CD4-positive, alpha-beta T cell (primary cell): ENCODE measurements at regions of chr3 and their contacts with region 1.

Region 1: GRCh38 chr3:179562591-179563270 is at the start of gene ACTL6A:
- DNase-seq: peak; percentile 94 to 99 (median 98)
- ATAC-seq: peak; percentile 90
- H3K4me3 ChIP-seq: peak within 1 kb of the TSS; percentile 83
- H3K4me3 Mint-ChIP-seq: peak within 1 kb of the TSS; percentile 91
- H3K27ac ChIP-seq: peak within 1 kb of the TSS; percentile 38 to 57
- H3K27ac Mint-ChIP-seq: peak within 1 kb of the TSS; percentile 85
- H3K4me1 ChIP-seq: peaks cover 31% of the 10 kb centered on the region
- H3K4me1 Mint-ChIP-seq: peaks cover 30% of the 10 kb centered on the region
- H3K27me3 ChIP-seq: no peaks in the 10 kb centered on the region
- H3K27me3 Mint-ChIP-seq: peaks cover 5% of the 10 kb centered on the region
- CTCF ChIP-seq: no peak
- total RNA-seq, gene ACTL6A: 19.0 to 19.3 TPM

Region 2: DNA sequence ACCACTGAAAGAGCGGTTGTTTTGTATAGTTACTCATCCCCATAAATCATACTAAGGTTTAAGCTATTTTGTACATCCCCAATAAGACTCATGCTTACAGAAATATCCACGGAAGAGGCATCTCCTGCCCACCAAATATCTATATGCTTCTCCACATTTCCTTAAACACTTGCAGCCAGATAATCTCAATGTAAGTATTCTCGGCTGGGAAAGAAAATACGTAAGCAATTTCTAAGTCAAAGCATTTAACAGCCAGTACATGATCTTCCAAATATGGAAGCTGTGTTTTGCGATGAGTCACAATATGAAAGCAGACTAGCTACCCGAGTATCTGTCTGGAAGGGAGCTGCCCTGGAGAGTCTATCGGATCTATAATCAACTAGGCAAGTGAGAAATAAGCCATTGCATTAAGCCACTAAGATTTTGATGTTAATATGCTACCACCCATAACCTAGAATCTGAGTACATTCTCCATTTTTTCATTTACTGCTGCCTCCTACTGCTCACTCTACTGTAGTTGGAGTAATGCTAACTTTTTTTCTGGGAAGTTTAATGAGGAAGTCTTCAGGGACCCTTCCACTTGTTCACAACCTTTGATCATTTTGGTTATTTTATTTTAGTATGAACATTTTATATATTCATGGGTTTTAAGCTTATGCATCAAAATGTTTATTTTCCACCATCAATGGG is 464.2 kb before region 1 on chr3:
- CTCF ChIA-PET with region 1: no interaction called
- POLR2A ChIA-PET with region 1: interaction called, 4 read pairs
- intact Hi-C with region 1: loop called in 1 of 2 experiments (anchors 10 kb)
- DNase-seq: no peak
- ATAC-seq: no peak
- H3K4me3 ChIP-seq: no peak overlapping the region
- H3K4me3 Mint-ChIP-seq: no peak overlapping the region
- H3K27ac ChIP-seq: no peak overlapping the region
- H3K27ac Mint-ChIP-seq: no peak overlapping the region
- H3K4me1 ChIP-seq: no peaks in the 10 kb centered on the region
- H3K4me1 Mint-ChIP-seq: no peaks in the 10 kb centered on the region
- H3K27me3 ChIP-seq: no peaks in the 10 kb centered on the region
- H3K27me3 Mint-ChIP-seq: no peaks in the 10 kb centered on the region
- CTCF ChIP-seq: no peak

Region 3: GRCh38 chr3:179347345-179348194 is 215.2 kb before region 1 on chr3 and contains the start of gene MFN1:
- CTCF ChIA-PET with region 1: no interaction called
- POLR2A ChIA-PET with region 1: interaction called, 3 read pairs
- intact Hi-C with region 1: loop called in 1 of 2 experiments (anchors 5 kb)
- DNase-seq: peak; percentile 72 to 95 (median 84)
- ATAC-seq: peak; percentile 99
- H3K4me3 ChIP-seq: peak within 1 kb of the TSS; percentile 86
- H3K4me3 Mint-ChIP-seq: peak within 1 kb of the TSS; percentile 99
- H3K27ac ChIP-seq: peak within 1 kb of the TSS; percentile 63 to 74
- H3K27ac Mint-ChIP-seq: peak within 1 kb of the TSS; percentile 90
- H3K4me1 ChIP-seq: peaks cover 19% of the 10 kb centered on the region
- H3K4me1 Mint-ChIP-seq: peaks cover 28% of the 10 kb centered on the region
- H3K27me3 ChIP-seq: no peaks in the 10 kb centered on the region
- H3K27me3 Mint-ChIP-seq: no peaks in the 10 kb centered on the region
- CTCF ChIP-seq: no peak
- total RNA-seq, gene MFN1: 20.7 to 26.1 TPM

Region 4: GRCh38 chr3:179653096-179653797 is 90.5 kb after region 1 on chr3:
- CTCF ChIA-PET with region 1: interaction called, 4 read pairs
- POLR2A ChIA-PET with region 1: interaction called, 14 read pairs
- intact Hi-C with region 1: loop called in 1 of 2 experiments (anchors 2 kb)
- DNase-seq: peak; percentile 44 to 82 (median 56)
- ATAC-seq: peak; percentile 64
- H3K4me3 ChIP-seq: peak overlapping the region; percentile 94
- H3K4me3 Mint-ChIP-seq: peak overlapping the region; percentile 98
- H3K27ac ChIP-seq: peak overlapping the region; percentile 47 to 48
- H3K27ac Mint-ChIP-seq: peak overlapping the region; percentile 91
- H3K4me1 ChIP-seq: peaks cover 22% of the 10 kb centered on the region
- H3K4me1 Mint-ChIP-seq: peaks cover 45% of the 10 kb centered on the region
- H3K27me3 ChIP-seq: no peaks in the 10 kb centered on the region
- H3K27me3 Mint-ChIP-seq: no peaks in the 10 kb centered on the region
- CTCF ChIP-seq: no peak